A549 (cell line): ENCODE measurements at regions of chr10 and their contacts with region 1.

Region 1: DNA sequence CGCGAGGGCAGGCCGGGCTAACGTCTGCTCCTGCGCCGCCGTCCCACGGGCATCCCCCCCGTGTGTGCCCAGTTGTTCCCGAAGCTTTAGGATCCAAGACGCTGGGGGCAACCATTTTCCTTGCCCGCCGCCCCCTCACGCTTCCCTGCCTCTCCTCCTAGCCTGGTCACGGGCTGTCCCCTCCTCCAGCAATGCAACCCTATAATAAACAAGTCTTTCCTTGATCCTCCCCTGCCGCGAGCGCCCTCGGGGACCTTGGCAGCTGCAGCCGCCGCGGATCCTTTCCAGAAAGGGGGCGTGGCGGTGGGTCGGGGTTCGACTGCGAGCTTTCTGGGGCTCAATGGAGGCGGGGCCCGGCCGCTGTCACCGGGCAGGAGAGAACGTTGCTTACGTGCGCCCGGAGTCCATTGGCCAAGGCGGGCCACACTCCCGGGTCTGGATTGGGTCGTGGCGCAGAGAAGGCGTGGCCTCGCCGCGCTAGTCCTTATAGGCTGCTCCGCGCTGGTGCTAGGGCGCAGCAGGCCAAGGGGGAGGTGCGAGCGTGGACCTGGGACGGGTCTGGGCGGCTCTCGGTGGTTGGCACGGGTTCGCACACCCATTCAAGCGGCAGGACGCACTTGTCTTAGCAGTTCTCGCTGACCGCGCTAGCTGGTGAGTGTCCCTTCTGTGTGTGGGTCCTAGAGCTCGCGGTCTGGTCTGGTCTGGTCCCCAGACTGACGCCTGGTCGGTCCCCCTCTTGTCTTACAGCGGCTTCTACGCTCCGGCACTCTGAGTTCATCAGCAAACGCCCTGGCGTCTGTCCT is at the start of gene DDIT4:
- DNase-seq: peak; percentile 99
- ATAC-seq: peak; percentile 57 to 85
- H3K4me3 ChIP-seq: peak within 1 kb of the TSS; percentile 84
- H3K27ac ChIP-seq: peak within 1 kb of the TSS; percentile 98 to 100
- H3K4me1 ChIP-seq: peaks cover 52% of the 10 kb centered on the region
- CTCF ChIP-seq: no peak
- EP300 ChIP-seq: 0 out of 5 replicates have a peak, but pooled peaks of 1 of the 2 experiments have one; percentile 35
- POLR2A ChIP-seq: peak; percentile 100
- RAD21 ChIP-seq: peak in 1 of 2 experiments; percentile 8; a peak in 3 of 5 replicates
- polyA plus RNA-seq, gene DDIT4: 329 and 392 TPM in 2 replicates

Region 2: DNA sequence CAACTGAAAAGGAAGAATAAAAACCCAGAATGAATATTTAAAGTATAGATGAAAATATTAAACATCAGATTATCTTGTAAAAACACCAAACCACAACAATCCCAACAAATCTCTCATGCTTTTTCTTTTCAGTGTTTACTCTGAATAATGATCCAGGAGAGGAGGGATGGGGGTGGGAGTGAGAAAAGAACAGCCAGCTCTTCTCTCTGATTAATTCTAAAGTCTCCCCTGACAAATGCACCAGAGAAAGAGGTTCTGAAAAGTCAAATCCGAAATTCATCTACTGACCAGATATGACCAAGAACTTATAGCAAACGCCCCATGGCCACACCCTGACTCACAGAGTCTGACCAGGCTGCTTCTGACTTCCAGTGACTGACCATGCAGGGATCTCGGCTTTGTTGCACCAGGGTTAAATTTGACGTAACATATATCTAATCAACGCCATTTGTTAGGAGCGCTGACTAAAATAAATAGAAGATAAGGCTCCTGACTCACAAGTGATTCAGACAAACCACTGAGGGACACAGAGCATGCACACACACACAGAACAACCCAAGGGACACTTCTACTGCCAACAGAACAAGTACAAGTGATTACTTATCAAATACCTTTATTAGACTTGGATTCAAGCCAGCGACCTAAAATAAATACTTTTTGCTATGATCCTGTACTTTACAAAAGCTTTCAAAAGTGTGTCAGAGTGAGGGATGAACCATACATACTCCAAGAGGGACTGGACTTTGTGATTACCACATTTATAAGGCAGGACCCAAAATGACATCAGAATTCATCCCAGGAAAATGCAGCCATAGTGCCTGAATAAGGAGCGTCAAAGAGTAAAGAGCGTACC is 175.9 kb before region 1 on chr10:
- CTCF ChIA-PET with region 1: no interaction called
- POLR2A ChIA-PET with region 1: no interaction called
- DNase-seq: peak; percentile 73 to 98
- ATAC-seq: peak; percentile 95 to 96
- H3K4me3 ChIP-seq: no peak overlapping the region
- H3K27ac ChIP-seq: peak overlapping the region; percentile 75 to 77
- H3K4me1 ChIP-seq: peaks cover 54% of the 10 kb centered on the region
- CTCF ChIP-seq: no peak
- EP300 ChIP-seq: peak; percentile 82 to 88; a peak in 3 of 5 replicates
- POLR2A ChIP-seq: no peak
- RAD21 ChIP-seq: peak in 1 of 2 experiments; percentile 29; a peak in 1 of 5 replicates

Region 3: GRCh38 chr10:72204296-72204695 is 69.3 kb before region 1 on chr10:
- CTCF ChIA-PET with region 1: no interaction called
- POLR2A ChIA-PET with region 1: no interaction called
- DNase-seq: no peak
- ATAC-seq: no peak
- H3K4me3 ChIP-seq: no peak overlapping the region
- H3K27ac ChIP-seq: no peak overlapping the region
- H3K4me1 ChIP-seq: no peaks in the 10 kb centered on the region
- CTCF ChIP-seq: no peak
- EP300 ChIP-seq: no peak
- POLR2A ChIP-seq: no peak
- RAD21 ChIP-seq: no peak

Region 4: GRCh38 chr10:72223743-72224101 is 49.9 kb before region 1 on chr10:
- CTCF ChIA-PET with region 1: interaction called, 30 read pairs
- POLR2A ChIA-PET with region 1: interaction called, 7 read pairs
- DNase-seq: no peak
- ATAC-seq: no peak
- H3K4me3 ChIP-seq: no peak overlapping the region
- H3K27ac ChIP-seq: peak overlapping the region; percentile 66 to 82
- H3K4me1 ChIP-seq: peaks cover 38% of the 10 kb centered on the region
- CTCF ChIP-seq: no peak
- EP300 ChIP-seq: no peak
- POLR2A ChIP-seq: no peak
- RAD21 ChIP-seq: no peak

Region 5: DNA sequence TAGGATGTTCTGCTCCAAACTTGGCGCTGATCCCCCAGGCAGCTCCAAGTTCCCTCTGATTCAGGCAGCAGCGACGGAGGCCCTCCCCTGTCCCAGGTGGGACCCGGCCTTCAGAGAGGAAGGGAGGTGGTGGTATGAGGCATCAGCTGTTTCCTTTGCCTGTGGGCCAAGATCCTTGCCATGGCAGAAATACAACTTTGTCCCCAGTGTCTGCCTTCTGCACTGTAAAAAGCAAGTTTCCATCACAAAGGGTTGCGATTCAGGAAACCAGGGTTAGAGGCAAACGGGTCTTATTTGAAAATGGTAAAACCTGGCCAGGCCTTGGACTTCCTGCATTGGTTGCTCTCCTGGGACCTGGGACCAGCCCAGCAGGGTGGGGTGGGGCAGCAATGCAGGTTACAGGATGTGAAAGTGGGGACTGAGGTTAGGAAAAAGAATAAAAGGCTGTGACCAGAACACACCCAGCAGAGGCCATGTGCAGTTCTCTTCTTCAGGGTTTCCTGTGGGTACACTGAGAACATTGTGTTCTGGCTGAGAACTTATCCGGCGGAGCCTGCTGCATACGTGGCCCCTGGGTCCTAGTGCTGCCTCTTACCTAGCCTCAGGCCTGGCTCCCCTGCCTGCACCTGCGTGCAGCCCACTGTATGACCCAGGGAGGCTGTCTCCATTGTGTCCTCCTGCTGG is 25.0 kb before region 1 on chr10:
- CTCF ChIA-PET with region 1: interaction called, 9 read pairs
- POLR2A ChIA-PET with region 1: interaction called, 61 read pairs
- DNase-seq: peak in 1 of 2 experiments; percentile 60
- ATAC-seq: peak; percentile 25 to 51; a peak in 4 of 6 replicates
- H3K4me3 ChIP-seq: peak overlapping the region; percentile 9; the same call in 2 of the 3 replicates
- H3K27ac ChIP-seq: peak overlapping the region; percentile 99 to 100
- H3K4me1 ChIP-seq: peaks cover 67% of the 10 kb centered on the region
- CTCF ChIP-seq: no peak
- EP300 ChIP-seq: no peak
- POLR2A ChIP-seq: peak; percentile 22; the same call in 1 of the 2 replicates
- RAD21 ChIP-seq: no peak; a peak in 1 of 5 replicates

Region 6: GRCh38 chr10:72285972-72286521 is 12.4 kb after region 1 on chr10:
- CTCF ChIA-PET with region 1: interaction called, 46 read pairs
- POLR2A ChIA-PET with region 1: interaction called, 43 read pairs
- DNase-seq: peak in 1 of 2 experiments; percentile 74
- ATAC-seq: peak; percentile 59 to 67
- H3K4me3 ChIP-seq: no peak overlapping the region
- H3K27ac ChIP-seq: peak overlapping the region; percentile 75 to 82
- H3K4me1 ChIP-seq: peaks cover 25% of the 10 kb centered on the region
- CTCF ChIP-seq: no peak
- EP300 ChIP-seq: no peak
- POLR2A ChIP-seq: no peak
- RAD21 ChIP-seq: 0 out of 5 replicates have a peak, but pooled peaks of 1 of the 2 experiments have one; percentile 6

Region 7: DNA sequence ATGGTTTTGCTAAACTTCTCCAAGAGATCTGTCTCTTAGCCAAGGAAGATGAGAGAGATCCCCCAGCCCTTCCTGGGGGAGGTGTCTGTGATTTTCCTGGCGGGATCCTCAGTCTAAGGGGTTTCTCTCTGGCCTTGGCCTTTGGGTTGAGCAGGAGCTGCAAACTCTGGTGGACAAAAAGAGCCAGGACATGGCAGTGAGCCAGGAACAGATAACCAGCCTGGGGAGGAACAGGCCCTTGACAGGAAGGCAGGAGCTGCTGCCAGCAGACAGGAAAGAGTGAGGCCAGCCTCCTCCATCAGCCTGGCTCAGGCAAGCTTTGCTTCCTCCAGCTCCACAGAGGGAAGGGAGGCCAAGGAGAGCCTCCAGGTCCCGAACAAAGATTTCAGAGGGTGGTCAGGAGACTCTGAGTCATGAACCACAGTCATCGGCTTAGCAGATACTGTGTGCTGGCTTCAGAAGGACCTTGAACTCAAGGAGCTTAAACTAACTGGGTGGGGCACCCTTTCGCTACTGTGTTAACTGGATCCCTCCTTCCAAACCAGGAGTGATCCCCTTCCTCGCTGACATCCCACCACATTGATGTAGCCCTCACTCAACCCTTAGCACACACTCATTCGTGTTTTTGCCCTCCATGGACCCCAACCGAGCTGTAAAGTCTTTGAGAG is 34.8 kb after region 1 on chr10:
- CTCF ChIA-PET with region 1: interaction called, 24 read pairs
- POLR2A ChIA-PET with region 1: interaction called, 32 read pairs
- DNase-seq: peak in 1 of 2 experiments; percentile 89
- ATAC-seq: peak; percentile 86
- H3K4me3 ChIP-seq: 0 out of 3 replicates have a peak overlapping the region, but pooled peaks have one; percentile 11
- H3K27ac ChIP-seq: peak overlapping the region; percentile 90 to 98
- H3K4me1 ChIP-seq: peaks cover 59% of the 10 kb centered on the region
- CTCF ChIP-seq: no peak
- EP300 ChIP-seq: peak in 1 of 2 experiments; percentile 33; a peak in 1 of 5 replicates
- POLR2A ChIP-seq: no peak
- RAD21 ChIP-seq: no peak

Region 8: DNA sequence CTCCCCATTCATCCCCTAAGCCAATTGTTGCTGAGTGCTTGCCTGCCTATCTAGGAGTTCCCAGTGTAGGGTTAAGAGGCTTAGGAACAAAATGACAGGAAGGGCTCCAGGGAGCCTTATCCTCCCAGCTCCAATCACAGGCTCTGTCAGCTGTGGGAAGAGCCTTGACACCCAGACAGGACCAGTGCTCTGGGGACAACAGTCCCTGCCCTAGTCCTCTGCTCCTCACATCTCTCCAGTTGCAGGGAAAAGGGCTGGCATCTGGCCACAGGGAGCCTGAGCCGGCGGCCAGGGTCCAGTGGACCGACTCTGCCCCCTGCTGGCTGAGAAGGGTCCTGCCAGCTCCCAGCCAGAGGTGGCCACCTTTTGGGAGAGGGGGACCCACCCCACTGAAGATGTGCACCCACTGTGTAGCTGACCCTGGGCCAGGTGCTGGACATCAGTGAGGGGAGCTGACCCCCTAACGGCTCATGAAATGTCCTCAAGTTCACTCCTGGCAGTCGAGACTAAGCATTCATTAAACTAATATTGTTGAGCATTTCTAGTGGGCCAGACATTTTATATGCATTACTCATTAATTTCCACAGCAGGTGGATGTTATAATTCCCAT is 63.5 kb after region 1 on chr10:
- CTCF ChIA-PET with region 1: interaction called, 79 read pairs
- POLR2A ChIA-PET with region 1: interaction called, 19 read pairs
- DNase-seq: peak; percentile 49 to 63
- ATAC-seq: peak; percentile 56 to 75; a peak in 5 of 6 replicates
- H3K4me3 ChIP-seq: no peak overlapping the region
- H3K27ac ChIP-seq: peak overlapping the region; percentile 78 to 80
- H3K4me1 ChIP-seq: peaks cover 48% of the 10 kb centered on the region
- CTCF ChIP-seq: peak; percentile 96
- EP300 ChIP-seq: no peak
- POLR2A ChIP-seq: no peak
- RAD21 ChIP-seq: peak; percentile 94 to 95

Region 9: GRCh38 chr10:72483471-72483870 is 209.9 kb after region 1 on chr10:
- CTCF ChIA-PET with region 1: no interaction called
- POLR2A ChIA-PET with region 1: no interaction called
- DNase-seq: no peak
- ATAC-seq: no peak
- H3K4me3 ChIP-seq: no peak overlapping the region
- H3K27ac ChIP-seq: no peak overlapping the region
- H3K4me1 ChIP-seq: no peaks in the 10 kb centered on the region
- CTCF ChIP-seq: no peak
- EP300 ChIP-seq: no peak
- POLR2A ChIP-seq: no peak
- RAD21 ChIP-seq: no peak